HEK293 (cell line): ENCODE measurements at regions of chr1 and their contacts with region 1.

Region 1: DNA sequence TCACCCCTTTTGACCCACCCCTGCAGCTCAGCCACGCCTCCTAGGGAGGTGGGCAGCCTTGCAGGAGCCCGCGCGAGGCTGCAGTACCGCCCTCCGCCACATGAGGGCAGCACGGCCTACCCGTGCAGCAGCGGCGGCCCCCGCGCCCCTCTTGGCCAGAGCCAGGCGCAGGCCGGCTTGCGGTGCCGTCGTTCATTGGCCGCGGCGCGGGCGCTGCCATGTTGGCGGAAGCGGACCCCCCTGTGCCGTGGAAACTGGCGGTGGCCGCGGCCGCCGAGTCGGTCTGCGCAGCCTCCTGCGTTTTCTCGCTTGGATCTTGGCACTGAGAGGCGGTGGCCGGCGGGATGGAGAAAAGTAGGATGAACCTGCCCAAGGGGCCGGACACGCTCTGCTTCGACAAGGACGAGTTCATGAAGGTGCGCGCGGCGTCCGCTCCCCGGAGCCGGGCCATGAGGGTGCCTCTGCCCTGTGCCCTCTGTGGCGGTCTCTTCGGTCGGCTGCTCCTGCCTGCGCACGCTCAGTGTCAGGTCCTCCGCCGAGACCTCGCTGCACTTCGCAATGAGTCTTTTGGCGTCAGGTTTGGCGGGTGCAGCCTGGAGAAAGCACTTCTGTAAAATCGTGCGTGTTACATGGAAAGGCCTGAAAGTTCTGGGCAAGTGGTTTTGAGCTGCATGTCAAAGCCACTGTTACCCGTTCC is at the start of gene COG2:
- H3K4me3 ChIP-seq: peak within 1 kb of the TSS; percentile 86
- H3K27ac ChIP-seq: peak within 1 kb of the TSS; percentile 79
- H3K4me1 ChIP-seq: peaks cover 13% of the 10 kb centered on the region
- CTCF ChIP-seq: peak; percentile 100

Region 2: DNA sequence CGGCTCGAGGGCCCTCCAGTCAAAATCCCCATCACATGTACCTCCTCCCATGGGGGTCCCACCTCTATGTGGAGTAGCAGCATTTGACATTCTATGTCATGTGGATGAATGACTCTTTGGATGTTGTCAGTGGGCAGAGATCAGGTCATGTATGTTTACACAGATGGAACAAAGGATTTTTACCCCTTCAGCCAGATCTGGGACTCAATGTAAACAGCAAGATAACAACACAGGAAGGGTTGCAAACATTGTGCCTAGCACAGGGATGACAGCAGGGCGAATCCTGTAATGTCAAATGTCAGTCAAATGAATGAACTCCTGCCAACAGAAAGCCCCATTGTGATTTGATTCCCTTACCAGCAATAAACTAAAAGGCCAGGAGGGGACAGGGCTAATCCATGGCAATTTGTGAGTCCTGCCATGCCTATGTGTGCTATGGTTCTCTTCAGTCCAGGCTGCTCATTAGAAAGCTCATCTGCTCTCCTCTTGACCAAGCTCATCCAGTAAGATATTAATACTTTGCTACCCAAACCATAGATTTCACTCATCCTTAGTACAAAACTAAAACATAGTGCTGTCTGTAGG is 276.6 kb before region 1 on chr1:
- CTCF ChIA-PET with region 1: no interaction called
- POLR2A ChIA-PET with region 1: no interaction called
- H3K4me3 ChIP-seq: no peak overlapping the region
- H3K27ac ChIP-seq: no peak overlapping the region
- H3K4me1 ChIP-seq: no peaks in the 10 kb centered on the region
- CTCF ChIP-seq: 0 out of 2 replicates have a peak, but pooled peaks have one; percentile 24

Region 3: GRCh38 chr1:230632273-230632873 is 10.0 kb before region 1 on chr1:
- CTCF ChIA-PET with region 1: interaction called, 11 read pairs
- POLR2A ChIA-PET with region 1: interaction called, 7 read pairs
- H3K4me3 ChIP-seq: no peak overlapping the region
- H3K27ac ChIP-seq: no peak overlapping the region
- H3K4me1 ChIP-seq: no peaks in the 10 kb centered on the region
- CTCF ChIP-seq: peak; percentile 88

Region 4: DNA sequence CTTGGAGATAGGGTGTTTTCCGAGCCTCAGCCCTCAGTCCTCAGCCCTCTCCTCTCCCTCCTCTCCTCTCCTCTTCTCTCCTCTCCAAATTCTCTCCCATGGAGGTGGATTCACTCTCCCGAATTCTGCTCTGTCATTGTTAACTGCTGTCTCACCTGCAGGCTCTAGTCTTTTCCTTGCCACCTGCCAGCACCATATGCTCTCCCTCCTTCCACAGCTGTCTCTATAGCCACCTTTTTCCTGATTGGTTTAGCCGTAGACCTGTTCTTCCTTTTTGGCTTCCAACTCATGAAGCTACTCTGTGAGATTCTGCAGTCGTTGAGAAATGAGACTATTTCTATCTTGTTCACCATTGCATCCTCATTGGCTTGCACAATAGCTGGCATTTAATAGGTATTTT is 19.6 kb after region 1 on chr1:
- CTCF ChIA-PET with region 1: interaction called, 10 read pairs
- POLR2A ChIA-PET with region 1: no interaction called
- H3K4me3 ChIP-seq: no peak overlapping the region
- H3K27ac ChIP-seq: no peak overlapping the region
- H3K4me1 ChIP-seq: no peaks in the 10 kb centered on the region
- CTCF ChIP-seq: no peak

Region 5: DNA sequence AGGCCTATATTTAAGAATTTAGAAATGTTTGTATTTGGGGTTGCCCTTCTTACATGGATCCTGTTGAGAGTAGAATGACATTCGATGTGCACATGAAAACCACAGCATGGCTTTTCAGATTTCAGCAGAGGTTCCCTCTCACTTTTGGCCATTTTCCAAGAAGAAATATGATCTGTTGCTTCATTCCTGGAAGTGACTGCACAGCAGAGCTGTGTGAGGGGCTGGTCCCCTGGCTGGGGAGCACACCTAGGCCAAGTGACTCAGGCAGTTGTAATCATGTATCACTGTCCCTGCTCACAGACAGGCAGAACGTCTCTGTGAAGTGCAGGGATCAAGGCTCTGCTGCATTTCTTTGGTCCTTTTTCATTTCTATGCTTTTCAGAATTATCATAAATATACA is 39.2 kb after region 1 on chr1:
- CTCF ChIA-PET with region 1: interaction called, 19 read pairs
- POLR2A ChIA-PET with region 1: interaction called, 7 read pairs
- H3K4me3 ChIP-seq: no peak overlapping the region
- H3K27ac ChIP-seq: no peak overlapping the region
- H3K4me1 ChIP-seq: peaks cover 13% of the 10 kb centered on the region; the same call in 1 of the 2 replicates
- CTCF ChIP-seq: no peak